ENCODE measurements at regions of chr7 and their contacts with region 1.

Region 1: DNA sequence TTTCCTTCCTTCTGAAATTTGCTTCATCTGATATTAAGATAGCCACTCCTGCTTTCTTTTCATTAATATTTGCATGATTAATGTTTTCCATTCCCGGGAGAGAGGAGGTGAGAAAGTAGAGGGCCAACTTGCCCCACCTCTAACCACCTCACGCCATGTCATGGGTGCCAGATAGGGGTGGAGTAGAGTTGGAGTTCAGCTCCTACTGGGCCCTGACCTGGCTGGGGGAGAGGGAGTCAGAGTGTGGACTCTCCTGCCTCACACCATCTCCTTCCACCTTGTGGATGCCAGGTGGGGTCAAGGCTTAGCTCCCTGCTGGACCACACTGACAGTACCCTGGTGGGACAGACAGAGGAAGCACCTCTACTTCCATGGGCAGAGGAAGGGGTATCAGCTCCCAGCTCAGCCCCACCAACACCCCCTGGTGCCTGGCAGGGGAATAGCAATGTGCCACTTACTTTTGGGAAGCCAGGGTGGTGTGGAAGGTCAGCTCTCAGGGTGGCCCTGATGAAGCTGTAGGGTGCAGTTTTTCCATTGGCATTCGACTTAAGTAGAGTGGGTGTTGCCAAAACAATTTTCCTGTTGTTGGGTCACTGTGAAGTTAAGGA is 28.0 kb downstream of the CHST12 start:
- DNase-seq: peak; percentile 9
- H3K4me3 ChIP-seq: no peak overlapping the region
- H3K27ac ChIP-seq: no peak overlapping the region
- H3K4me1 ChIP-seq: no peaks in the 10 kb centered on the region
- H3K27me3 ChIP-seq: no peaks in the 10 kb centered on the region
- CTCF ChIP-seq: peak; percentile 68 to 72
- POLR2A ChIP-seq: no peak

Region 2: DNA sequence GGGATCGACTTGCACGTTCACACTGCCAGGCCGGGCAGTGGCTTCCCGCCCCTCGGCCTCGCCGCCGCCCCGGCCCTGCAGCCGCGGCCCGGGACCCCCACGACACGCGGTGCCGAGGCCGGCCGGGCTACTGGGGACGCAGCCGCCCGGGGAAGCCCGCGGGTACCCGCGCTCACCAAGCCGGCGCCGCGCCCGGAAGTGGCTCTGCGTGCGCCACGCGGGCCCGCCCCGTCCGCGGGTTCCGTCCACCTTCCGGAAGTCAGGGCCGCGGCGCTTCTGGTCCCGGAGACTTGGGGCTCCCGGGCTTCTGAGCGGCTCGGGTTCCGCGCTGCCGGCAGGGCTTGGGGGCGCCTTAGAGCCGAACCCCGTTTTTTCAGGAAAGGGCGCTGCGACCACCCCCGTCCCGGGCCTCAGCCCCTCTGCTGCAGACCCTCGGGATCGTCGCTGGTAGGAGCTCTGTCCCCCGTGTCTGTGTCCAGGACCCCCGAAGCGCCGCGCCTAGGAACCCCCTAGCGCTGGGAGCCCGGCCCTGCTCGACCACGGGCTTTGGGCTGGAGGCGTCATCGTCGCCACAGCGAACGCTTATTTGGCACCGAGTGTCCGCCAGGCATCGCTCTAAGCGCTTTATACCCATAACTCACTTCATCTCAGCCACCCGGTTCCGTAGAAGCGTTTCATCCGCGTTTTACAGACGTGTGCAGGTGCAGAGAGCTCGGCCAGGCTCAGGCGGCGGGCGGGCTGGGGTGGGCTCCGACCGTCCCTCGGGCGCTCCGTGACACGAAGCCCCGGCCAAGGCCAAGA is 861.3 kb before region 1 on chr7 and contains the start of gene PSMG3:
- CTCF ChIA-PET with region 1: no interaction called
- POLR2A ChIA-PET with region 1: no interaction called
- dilution Hi-C with region 1: no loop called
- intact Hi-C with region 1: loop called (anchors 10 kb)
- DNase-seq: peak; percentile 78
- H3K4me3 ChIP-seq: peak within 1 kb of the TSS; percentile 90 to 93 (median 93)
- H3K27ac ChIP-seq: peak within 1 kb of the TSS; percentile 93
- H3K4me1 ChIP-seq: peaks cover 3% of the 10 kb centered on the region
- H3K27me3 ChIP-seq: no peaks in the 10 kb centered on the region
- CTCF ChIP-seq: peak in 1 of 2 donors; percentile 33
- POLR2A ChIP-seq: peak; percentile 93
- total RNA-seq, gene PSMG3: 25.5 and 28.4 TPM in 2 replicates

Region 3: GRCh38 chr7:1638215-1638661 is 793.1 kb before region 1 on chr7:
- CTCF ChIA-PET with region 1: no interaction called
- POLR2A ChIA-PET with region 1: no interaction called
- dilution Hi-C with region 1: no loop called
- intact Hi-C with region 1: no loop called
- DNase-seq: no peak
- H3K4me3 ChIP-seq: no peak overlapping the region
- H3K27ac ChIP-seq: no peak overlapping the region
- H3K4me1 ChIP-seq: no peaks in the 10 kb centered on the region
- H3K27me3 ChIP-seq: no peaks in the 10 kb centered on the region
- CTCF ChIP-seq: no peak
- POLR2A ChIP-seq: no peak

Region 4: GRCh38 chr7:1899196-1899595 is 532.2 kb before region 1 on chr7:
- CTCF ChIA-PET with region 1: no interaction called
- POLR2A ChIA-PET with region 1: no interaction called
- dilution Hi-C with region 1: no loop called
- intact Hi-C with region 1: no loop called
- DNase-seq: no peak
- H3K4me3 ChIP-seq: no peak overlapping the region
- H3K27ac ChIP-seq: no peak overlapping the region
- H3K4me1 ChIP-seq: no peaks in the 10 kb centered on the region
- H3K27me3 ChIP-seq: no peaks in the 10 kb centered on the region
- CTCF ChIP-seq: no peak
- POLR2A ChIP-seq: no peak

Region 5: DNA sequence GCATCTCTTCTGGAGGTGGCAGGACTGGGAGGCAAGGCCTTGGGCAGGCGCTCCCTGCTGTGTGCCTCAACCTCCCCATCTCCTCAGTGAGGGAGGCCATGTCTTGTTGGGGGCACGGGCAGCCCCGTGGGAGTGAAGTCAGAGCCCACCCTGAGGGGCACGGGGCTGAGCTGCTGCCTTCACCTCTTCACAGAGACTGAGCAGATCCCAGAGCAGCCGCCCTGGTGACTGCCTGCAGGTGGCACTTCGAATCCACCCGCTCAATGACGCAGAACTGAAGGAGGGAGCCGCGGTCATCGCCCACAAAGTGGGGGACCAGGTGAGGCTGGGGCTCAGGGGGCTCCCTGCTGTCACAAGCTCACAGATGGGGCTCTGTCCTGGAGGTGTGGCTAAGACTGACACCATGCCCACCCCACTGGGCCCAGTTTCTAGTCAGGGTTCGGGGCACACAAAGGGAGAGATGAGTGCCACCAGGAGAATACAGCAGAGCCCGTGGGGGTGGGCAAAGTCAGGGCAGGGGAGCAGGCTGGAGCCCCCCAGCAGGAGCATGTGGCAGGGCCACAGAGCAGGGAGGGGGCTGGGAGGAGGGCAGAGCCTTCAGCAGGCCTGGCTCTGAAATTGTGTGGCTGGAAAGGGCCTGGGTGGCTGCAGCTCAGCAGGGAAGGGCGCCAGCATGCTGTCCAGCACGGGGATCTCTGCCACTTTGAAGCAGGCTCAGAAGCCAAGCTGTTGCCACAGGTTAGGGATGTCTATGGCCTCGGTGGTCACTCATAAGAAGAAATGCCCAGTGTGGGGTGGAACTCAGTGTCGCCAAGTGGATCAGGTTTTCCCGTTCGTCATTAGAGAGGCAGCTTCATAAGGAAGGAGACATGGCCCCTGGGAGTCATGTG is 46.8 kb before region 1 on chr7:
- CTCF ChIA-PET with region 1: interaction called, 29 read pairs
- POLR2A ChIA-PET with region 1: no interaction called
- dilution Hi-C with region 1: no loop called
- intact Hi-C with region 1: loop called (anchors 1 kb)
- DNase-seq: no peak
- H3K4me3 ChIP-seq: no peak overlapping the region
- H3K27ac ChIP-seq: no peak overlapping the region
- H3K4me1 ChIP-seq: no peaks in the 10 kb centered on the region
- H3K27me3 ChIP-seq: no peaks in the 10 kb centered on the region
- CTCF ChIP-seq: no peak
- POLR2A ChIP-seq: no peak

Region 6: DNA sequence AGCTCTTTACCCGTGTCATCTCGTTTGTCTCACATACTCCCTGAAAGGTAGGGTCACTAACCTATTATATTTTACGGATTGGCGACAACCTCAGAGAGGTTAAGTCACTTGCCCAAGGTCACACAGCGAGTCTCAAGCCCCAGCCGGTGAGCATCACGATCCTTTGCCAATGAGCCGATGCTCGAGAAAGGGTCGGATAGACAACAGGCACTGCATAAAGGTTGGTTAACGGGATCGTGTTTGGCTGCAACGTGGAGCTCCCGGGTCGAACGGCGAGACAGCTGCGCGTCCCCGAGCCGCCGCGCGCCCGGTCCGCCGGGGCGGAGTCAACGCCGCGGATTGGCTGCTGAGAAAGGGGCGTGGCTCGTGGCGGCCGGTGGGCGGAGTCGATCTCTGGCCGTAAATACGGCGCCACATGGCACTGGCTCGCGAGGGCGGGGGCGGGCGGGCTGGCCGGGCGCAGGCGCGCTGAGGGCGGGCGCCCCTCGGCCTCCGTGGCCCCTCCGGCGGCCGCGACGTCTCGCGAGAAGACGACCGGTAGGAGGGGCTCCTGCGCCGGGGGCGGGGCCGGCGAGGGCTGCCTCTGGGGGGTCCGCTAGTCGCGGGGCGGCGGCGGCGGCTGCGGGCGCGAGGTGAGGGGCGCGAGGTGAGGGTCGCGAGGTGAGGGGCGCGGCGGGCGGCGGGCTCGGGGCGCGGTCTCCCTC is 28.2 kb before region 1 on chr7 and contains the start of gene CHST12:
- CTCF ChIA-PET with region 1: interaction called, 9 read pairs
- POLR2A ChIA-PET with region 1: no interaction called
- dilution Hi-C with region 1: no loop called
- intact Hi-C with region 1: loop called (anchors 1 kb)
- DNase-seq: peak; percentile 94
- H3K4me3 ChIP-seq: peak within 1 kb of the TSS; percentile 68 to 75 (median 68)
- H3K27ac ChIP-seq: no peak within 1 kb of the TSS
- H3K4me1 ChIP-seq: peaks cover 24% of the 10 kb centered on the region
- H3K27me3 ChIP-seq: no peaks in the 10 kb centered on the region
- CTCF ChIP-seq: no peak
- POLR2A ChIP-seq: peak; percentile 66
- total RNA-seq, gene CHST12: 28.8 and 30.2 TPM in 2 replicates

Region 7: DNA sequence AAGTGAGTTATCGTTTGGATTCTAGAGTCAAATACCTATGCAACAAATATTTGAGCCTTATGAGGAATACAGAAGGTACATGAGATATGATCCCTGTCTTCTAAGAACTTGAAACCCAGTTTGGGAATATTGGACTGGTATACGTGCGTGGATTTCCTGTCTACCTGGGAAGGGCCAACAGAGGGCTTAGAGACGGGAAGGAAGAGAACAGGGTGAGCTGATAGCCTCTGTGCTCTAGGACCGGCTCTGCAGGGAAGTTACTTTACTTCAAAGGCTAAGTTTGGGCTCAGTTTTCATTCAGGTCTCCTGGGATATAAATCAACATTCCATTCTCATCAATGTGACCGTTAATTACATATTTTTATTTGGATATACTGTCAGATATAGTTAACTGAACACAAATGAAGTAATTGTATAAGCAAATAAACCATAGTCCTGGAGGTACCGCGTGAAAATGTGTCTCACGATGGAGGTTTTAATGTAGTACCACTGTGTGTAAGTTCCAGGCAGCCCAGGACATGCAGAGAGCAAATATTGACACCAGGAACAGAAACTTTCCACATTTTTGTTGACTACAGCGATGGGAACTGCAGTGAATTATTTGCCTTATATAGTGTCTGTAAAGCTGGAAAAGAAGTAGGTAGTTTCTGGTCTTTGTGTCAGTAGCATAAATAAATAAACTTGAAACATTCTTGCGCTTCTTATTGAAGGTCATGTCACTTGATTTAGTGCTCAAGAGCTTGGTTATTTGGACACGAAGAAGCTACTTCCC is 19.4 kb before region 1 on chr7:
- CTCF ChIA-PET with region 1: interaction called, 21 read pairs
- POLR2A ChIA-PET with region 1: no interaction called
- dilution Hi-C with region 1: no loop called
- intact Hi-C with region 1: loop called (anchors 2 kb)
- DNase-seq: no peak
- H3K4me3 ChIP-seq: no peak overlapping the region
- H3K27ac ChIP-seq: peak overlapping the region; percentile 33
- H3K4me1 ChIP-seq: peaks cover 45% of the 10 kb centered on the region
- H3K27me3 ChIP-seq: no peaks in the 10 kb centered on the region
- CTCF ChIP-seq: no peak
- POLR2A ChIP-seq: no peak

Measured in endothelial cell of umbilical vein (primary cell).